Aorta (tissue), 5 donors: ENCODE measurements at regions of chr4 and their contacts with region 1.

Region 1: GRCh38 chr4:8468746-8469535 is 28.4 kb downstream of the TRMT44 start:
- DNase-seq: peak; percentile 76 to 87
- ATAC-seq: peak; percentile 69
- H3K4me3 ChIP-seq: no peak overlapping the region
- H3K27ac ChIP-seq: no peak overlapping the region
- H3K4me1 ChIP-seq: no peaks in the 10 kb centered on the region
- H3K27me3 ChIP-seq: no peaks in the 10 kb centered on the region

Region 2: GRCh38 chr4:8267077-8267476 is 201.9 kb before region 1 on chr4:
- intact Hi-C with region 1: no loop called
- DNase-seq: peak; percentile 76 to 87
- ATAC-seq: peak; percentile 65
- H3K4me3 ChIP-seq: no peak overlapping the region
- H3K27ac ChIP-seq: no peak overlapping the region
- H3K4me1 ChIP-seq: no peaks in the 10 kb centered on the region
- H3K27me3 ChIP-seq: no peaks in the 10 kb centered on the region

Region 3: GRCh38 chr4:8504279-8505007 is 35.5 kb after region 1 on chr4:
- intact Hi-C with region 1: loop called in 1 of 2 experiments (anchors 2 kb)
- DNase-seq: no peak
- ATAC-seq: no peak
- H3K4me3 ChIP-seq: no peak overlapping the region
- H3K27ac ChIP-seq: no peak overlapping the region
- H3K4me1 ChIP-seq: peaks cover 0 to 3% of the 10 kb centered on the region in 2 donors
- H3K27me3 ChIP-seq: no peaks in the 10 kb centered on the region

Region 4: DNA sequence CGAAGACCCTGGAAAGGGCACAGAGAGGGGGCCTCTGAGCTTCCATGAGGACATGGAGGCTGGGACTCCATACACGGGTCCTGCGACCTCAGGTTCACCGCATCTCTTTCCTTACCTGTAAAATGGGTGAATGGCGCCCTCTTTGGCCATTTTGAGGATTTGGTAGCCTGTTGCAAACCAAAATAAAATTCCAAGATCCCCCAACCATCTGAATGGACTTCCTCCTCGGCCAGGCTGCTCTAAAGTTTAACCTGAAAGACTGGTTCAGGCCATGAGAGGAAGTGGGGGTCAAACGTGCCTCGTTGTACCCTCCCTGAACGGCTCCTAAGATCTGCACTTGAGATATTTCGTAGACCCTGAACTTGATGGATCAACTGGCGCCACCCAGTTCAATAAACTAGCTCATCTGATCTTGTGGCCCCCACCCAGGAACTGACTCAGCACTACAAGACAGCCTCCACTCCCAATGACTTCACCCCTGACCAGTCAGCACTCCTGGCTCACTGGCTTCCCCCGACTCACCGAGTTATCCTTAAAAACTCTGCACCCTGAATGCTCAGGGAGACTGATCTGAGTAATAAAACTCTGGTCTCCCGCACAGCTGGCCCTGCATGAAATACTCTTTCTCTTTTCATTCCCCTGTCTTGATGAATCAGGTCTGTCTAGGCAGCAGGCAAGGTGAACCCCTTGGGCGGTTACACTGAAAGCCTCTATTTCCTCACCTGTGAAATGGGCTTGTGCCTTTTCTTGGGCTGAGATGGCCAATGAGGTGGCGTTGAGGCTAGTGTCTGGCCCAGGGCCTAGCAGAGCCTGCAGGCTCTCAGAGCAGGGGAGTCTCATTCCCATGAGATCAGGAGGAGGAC is 78.4 kb after region 1 on chr4:
- intact Hi-C with region 1: loop called (anchors 1 to 5 kb)
- DNase-seq: peak in 1 of 2 donors; percentile 28
- ATAC-seq: no peak
- H3K4me3 ChIP-seq: no peak overlapping the region
- H3K27ac ChIP-seq: no peak overlapping the region
- H3K4me1 ChIP-seq: no peaks in the 10 kb centered on the region
- H3K27me3 ChIP-seq: no peaks in the 10 kb centered on the region

Region 5: DNA sequence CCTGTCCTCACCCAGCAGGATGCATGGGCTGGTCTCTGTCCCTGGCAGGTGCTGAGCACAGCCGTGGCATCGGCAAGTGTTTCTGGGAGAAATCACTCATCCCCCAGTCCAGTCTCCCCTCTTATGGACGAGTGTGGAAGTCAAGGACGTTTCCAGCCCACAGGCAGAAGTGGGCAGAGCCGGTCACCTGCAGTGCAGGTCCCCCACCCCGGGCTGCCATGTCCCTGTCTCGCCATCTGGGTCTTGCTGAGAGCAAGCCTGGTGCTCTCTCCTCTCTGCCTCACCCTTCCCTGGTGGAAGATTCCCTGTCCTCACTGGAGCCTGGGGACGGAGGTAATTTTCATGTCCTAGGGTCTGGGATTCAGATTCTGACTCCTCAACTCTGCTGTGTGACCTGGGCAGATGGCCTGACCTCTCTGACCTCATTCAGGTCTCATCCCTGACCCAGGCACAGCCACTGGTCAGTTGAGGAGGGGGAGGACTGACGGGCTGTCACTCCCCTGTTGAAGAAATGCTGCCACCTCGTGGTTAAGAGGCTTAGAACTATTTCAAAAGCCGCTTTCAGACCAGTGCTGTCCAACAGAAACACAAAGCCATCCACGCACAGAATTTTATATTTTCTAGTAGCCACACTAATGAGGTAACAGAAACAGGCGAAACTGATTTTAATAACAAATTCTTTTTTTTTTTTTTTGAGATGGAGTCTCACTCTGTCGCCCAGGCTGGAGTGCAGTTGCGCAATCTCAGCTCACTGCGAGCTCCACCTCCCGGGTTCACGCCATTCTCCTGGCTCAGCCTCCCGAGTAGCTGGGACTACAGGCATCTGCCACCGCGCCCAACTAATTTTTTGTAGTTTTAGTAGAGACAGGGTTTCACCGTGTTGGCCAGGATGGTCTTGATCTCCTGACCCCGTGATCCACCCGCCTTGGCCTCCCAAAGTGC is 125.4 kb after region 1 on chr4:
- intact Hi-C with region 1: loop called (anchors 2 kb)
- DNase-seq: no peak
- ATAC-seq: peak; percentile 67
- H3K4me3 ChIP-seq: no peak overlapping the region
- H3K27ac ChIP-seq: no peak overlapping the region
- H3K4me1 ChIP-seq: no peaks in the 10 kb centered on the region
- H3K27me3 ChIP-seq: no peaks in the 10 kb centered on the region

Region 6: GRCh38 chr4:8765631-8766590 is 297.0 kb after region 1 on chr4:
- intact Hi-C with region 1: no loop called
- DNase-seq: peak; percentile 31 to 61
- ATAC-seq: no peak
- H3K4me3 ChIP-seq: no peak overlapping the region
- H3K27ac ChIP-seq: no peak overlapping the region
- H3K4me1 ChIP-seq: no peaks in the 10 kb centered on the region
- H3K27me3 ChIP-seq: no peaks in the 10 kb centered on the region

Region 7: DNA sequence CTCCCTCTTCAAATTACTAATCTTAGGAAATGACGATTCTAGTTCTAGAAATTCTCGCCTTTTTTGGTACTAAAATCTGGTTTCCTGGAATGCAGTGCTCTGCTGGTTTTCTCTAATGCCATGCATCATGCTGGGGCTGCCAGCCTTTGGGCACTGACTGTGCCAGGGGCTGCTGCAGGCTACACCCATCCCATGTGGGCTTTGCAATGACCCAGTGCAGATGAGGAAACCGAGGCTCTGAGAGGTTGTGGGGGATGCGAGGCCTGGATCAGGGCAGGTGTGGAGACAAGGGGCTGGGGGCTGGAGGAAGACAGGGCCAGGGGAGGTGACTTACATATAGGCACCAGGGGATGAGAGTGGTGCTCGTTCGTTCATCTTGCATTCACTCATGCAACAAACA is 307.4 kb after region 1 on chr4:
- intact Hi-C with region 1: no loop called
- DNase-seq: peak; percentile 16 to 51
- ATAC-seq: no peak
- H3K4me3 ChIP-seq: no peak overlapping the region
- H3K27ac ChIP-seq: no peak overlapping the region
- H3K4me1 ChIP-seq: no peaks in the 10 kb centered on the region
- H3K27me3 ChIP-seq: no peaks in the 10 kb centered on the region